SK-N-SH (cell line): ENCODE measurements at regions of chr13 and their contacts with region 1.

Region 1: DNA sequence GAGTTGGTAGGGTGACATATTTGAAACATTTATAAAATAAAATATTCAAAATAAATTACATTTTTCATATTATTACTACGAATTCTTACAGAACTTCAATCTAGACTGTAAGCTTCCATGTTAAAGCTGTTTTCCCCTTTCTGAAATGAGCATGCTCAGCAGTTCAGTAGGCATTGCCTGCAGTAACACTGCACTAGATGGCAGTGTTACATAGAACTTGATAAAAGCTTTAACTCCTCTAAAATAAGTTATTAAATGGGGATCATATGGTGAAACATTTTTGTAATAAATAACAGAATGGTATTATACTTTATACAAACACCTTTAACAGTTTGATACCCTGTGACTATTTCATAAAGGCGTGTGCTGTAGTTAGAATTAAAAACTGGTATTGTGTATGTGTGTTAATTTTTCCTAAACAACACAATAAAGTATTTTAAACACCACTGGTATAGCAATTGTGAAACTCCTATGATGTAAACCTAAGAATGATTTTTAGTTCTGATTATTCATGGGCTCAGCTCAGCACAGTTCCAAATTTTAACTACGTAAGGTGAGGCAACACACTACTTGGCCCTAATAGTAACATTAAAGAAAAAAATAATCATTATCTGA is 11.6 kb upstream of the GPR18 start:
- DNase-seq: peak; percentile 17
- H3K4me3 ChIP-seq: no peak overlapping the region; a peak in 1 of 4 replicates
- H3K27ac ChIP-seq: no peak overlapping the region
- H3K4me1 ChIP-seq: no peaks in the 10 kb centered on the region
- H3K27me3 ChIP-seq: no peaks in the 10 kb centered on the region
- CTCF ChIP-seq: peak; percentile 90
- EP300 ChIP-seq: no peak
- RAD21 ChIP-seq: peak; percentile 85

Region 2: DNA sequence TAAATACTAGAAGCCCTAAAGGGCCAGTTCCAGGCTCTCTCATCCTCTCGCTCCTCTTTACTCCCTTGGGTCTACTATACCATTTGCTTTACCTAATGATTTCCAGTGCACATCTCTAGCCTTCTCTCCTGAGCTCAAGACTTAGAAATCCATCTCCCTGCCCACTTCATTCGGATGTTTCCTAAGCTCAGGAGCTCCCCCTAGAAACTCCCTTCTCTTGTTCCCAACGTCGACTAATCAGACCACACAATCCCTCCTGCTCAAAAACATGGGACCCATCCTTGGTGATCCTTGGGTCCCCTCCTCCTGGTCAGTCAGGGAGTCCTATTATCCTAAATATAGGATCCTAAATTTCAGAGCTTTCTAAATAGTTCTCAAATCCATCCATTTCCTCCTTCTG is 671.7 kb before region 1 on chr13:
- CTCF ChIA-PET with region 1: no interaction called
- POLR2A ChIA-PET with region 1: no interaction called
- DNase-seq: no peak
- H3K4me3 ChIP-seq: no peak overlapping the region
- H3K27ac ChIP-seq: no peak overlapping the region
- H3K4me1 ChIP-seq: no peaks in the 10 kb centered on the region
- H3K27me3 ChIP-seq: no peaks in the 10 kb centered on the region
- CTCF ChIP-seq: no peak; the same call in 1 of the 2 replicates
- EP300 ChIP-seq: no peak
- RAD21 ChIP-seq: peak; percentile 35; the same call in 1 of the 2 replicates

Region 3: GRCh38 chr13:98609756-98610155 is 660.0 kb before region 1 on chr13:
- CTCF ChIA-PET with region 1: no interaction called
- POLR2A ChIA-PET with region 1: no interaction called
- DNase-seq: no peak
- H3K4me3 ChIP-seq: no peak overlapping the region
- H3K27ac ChIP-seq: no peak overlapping the region
- H3K4me1 ChIP-seq: no peaks in the 10 kb centered on the region; a peak in 1 of 4 replicates
- H3K27me3 ChIP-seq: no peaks in the 10 kb centered on the region; the same call in 1 of the 2 replicates
- CTCF ChIP-seq: no peak
- EP300 ChIP-seq: no peak
- RAD21 ChIP-seq: no peak

Region 4: DNA sequence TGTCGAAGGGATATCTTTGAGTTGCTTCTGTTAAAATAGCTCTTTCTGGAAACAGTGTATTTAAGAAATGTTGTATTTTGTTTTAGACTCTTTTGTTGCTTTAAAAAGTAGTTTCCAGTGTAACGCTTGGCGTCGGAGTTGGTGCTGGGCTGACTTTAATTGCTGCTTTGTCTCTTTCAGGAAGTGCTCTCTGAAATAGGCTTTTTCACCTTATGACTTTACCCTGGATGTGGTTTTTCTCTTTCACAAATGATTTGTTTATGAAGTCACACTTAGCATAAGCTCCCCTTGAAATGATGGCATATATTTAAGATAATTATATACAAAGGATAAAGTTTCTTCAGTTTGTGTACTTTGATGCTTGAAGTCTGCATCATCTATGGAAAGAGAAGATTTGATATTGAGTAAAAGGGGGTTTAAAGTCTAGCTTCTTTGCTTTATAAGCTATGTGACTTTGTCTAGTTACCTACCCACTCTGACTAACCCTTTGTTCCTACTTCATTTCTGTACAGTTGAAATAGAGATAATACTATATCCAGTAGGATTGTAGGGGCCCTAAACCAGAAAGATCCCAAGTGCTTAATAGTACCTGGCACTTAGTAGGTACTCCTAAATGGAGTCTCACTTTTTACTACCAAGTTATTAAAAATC is 11.4 kb before region 1 on chr13 and contains the start of gene GPR18:
- CTCF ChIA-PET with region 1: interaction called, 16 read pairs
- POLR2A ChIA-PET with region 1: no interaction called
- DNase-seq: no peak
- H3K4me3 ChIP-seq: no peak within 1 kb of the TSS
- H3K27ac ChIP-seq: no peak within 1 kb of the TSS
- H3K4me1 ChIP-seq: no peaks in the 10 kb centered on the region; a peak in 2 of 4 replicates
- H3K27me3 ChIP-seq: no peaks in the 10 kb centered on the region
- CTCF ChIP-seq: no peak
- EP300 ChIP-seq: no peak
- RAD21 ChIP-seq: no peak
- polyA plus RNA-seq, gene GPR18: not detected in 2 replicates

Region 5: DNA sequence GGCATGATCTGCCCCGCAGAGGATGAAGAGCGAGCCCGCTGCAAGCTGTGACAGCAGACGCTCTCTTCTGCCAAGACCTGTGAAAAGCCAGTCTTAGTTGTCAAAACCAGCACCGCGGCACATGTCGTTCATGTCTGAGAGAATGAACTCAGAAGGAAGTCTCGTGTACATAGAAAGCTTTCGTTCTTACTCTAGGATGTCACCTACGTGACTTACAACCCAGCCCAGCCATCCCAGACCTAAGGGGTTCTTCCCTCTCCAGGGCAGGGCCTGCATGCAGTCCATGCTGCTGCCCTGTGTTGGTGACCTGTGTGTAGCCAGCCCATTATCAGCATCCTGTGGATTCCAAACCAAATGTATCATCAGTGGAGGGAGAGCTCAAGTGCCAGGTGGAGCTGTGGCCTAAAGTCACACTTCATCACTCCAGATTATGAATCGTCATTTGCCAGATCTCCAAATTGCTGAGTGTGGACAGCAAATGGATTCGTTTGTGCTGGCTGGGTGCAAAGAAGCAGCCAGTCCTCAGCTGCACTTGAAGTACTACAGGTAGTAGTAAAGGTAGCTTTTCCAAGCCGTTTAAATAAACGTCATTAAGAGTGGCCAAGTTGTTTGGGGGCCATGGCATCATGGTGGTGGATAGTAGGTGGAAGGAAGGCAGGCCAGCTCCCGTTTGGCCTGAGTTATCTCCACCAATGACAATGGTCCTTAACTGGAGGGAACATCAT is 111.3 kb after region 1 on chr13:
- CTCF ChIA-PET with region 1: interaction called, 16 read pairs
- POLR2A ChIA-PET with region 1: no interaction called
- DNase-seq: no peak
- H3K4me3 ChIP-seq: no peak overlapping the region
- H3K27ac ChIP-seq: no peak overlapping the region
- H3K4me1 ChIP-seq: peaks cover 0 to 5% of the 10 kb centered on the region in 2 experiments; a peak in 1 of 4 replicates
- H3K27me3 ChIP-seq: no peaks in the 10 kb centered on the region
- CTCF ChIP-seq: no peak
- EP300 ChIP-seq: no peak
- RAD21 ChIP-seq: no peak

Region 6: DNA sequence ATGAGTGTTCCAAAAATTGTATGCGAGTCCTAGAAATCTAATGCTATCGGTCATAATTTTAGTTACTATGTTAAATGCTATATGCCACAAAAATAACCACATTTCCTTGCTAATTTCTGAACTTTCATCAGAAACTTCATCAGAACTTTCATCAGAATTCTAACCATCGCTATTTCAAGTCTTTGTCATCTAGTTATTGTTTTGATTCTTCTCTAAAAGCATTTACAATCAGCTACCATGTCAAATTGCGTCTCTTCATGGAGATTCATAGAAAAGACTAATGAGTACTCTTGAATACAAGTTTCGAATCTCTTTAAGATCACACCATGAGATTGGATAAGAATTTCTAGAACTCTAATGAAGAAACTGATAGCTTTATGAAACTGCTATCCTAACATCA is 178.8 kb after region 1 on chr13:
- CTCF ChIA-PET with region 1: interaction called, 10 read pairs
- POLR2A ChIA-PET with region 1: no interaction called
- DNase-seq: no peak
- H3K4me3 ChIP-seq: no peak overlapping the region
- H3K27ac ChIP-seq: no peak overlapping the region
- H3K4me1 ChIP-seq: no peaks in the 10 kb centered on the region
- H3K27me3 ChIP-seq: no peaks in the 10 kb centered on the region
- CTCF ChIP-seq: no peak
- EP300 ChIP-seq: no peak
- RAD21 ChIP-seq: no peak